ENCODE measurements at regions of chr9 and their contacts with region 1.

Region 1: GRCh38 chr9:34072868-34073590 is 24.3 kb upstream of the UBAP2 start:
- DNase-seq: peak; percentile 60
- H3K4me3 ChIP-seq: no peak overlapping the region
- H3K27me3 ChIP-seq: no peaks in the 10 kb centered on the region
- CTCF ChIP-seq: no peak

Region 2: DNA sequence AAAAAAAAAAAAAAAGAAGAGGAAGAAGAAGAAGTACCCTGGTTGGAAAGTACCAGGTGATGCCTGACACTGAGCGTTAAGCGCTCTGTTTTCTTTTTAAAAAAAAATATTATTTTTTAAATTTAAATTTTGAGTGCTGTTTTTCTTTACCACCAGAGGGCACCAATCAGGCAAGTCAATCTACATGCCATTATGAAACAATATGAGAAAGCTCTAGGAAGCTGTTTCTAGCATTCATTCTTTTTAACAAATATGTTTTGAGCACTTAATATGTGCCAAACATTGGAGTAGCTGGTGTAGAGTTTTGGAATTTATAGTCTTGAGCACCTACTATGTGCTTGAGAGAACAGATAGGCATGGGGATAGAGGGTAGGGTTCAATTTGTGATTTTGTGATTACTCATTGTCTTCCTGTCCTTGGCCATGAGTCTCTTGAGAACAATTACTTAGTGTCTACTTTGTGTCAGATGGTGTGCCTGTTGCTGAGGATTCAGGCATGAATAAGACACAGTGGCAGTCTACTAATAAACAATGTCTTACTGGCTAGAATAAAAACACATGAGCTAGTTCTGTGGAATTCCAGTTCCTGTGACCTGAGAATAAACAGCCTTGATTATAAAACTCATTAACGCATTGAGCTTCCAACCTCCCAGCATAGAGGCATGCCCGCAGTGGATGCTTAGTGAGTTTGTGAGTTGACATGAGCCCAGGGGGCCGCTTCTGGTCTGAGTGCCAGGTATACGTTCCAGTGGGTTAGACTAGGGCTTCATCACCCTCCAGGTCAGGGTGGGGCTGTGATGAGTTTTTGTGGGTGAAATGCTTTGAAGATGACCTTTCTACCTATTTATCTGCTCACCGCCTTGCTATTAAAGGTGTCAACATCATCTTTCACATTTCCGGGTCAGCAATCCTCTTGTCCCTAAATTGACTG is 259.1 kb before region 1 on chr9:
- CTCF ChIA-PET with region 1: interaction called, 10 read pairs
- POLR2A ChIA-PET with region 1: no interaction called
- DNase-seq: peak; percentile 70
- H3K4me3 ChIP-seq: no peak overlapping the region
- H3K27me3 ChIP-seq: no peaks in the 10 kb centered on the region
- CTCF ChIP-seq: peak; percentile 64

Region 3: GRCh38 chr9:34010979-34011378 is 62.0 kb before region 1 on chr9:
- CTCF ChIA-PET with region 1: interaction called, 19 read pairs
- POLR2A ChIA-PET with region 1: no interaction called
- DNase-seq: no peak
- H3K4me3 ChIP-seq: no peak overlapping the region
- H3K27me3 ChIP-seq: no peaks in the 10 kb centered on the region
- CTCF ChIP-seq: peak; percentile 33; the same call in 1 of the 2 replicates

Region 4: GRCh38 chr9:34084562-34084961 is 11.5 kb after region 1 on chr9:
- CTCF ChIA-PET with region 1: interaction called, 10 read pairs
- POLR2A ChIA-PET with region 1: no interaction called
- DNase-seq: no peak
- H3K4me3 ChIP-seq: no peak overlapping the region
- H3K27me3 ChIP-seq: no peaks in the 10 kb centered on the region
- CTCF ChIP-seq: no peak

Region 5: GRCh38 chr9:34252670-34253459 is 179.8 kb after region 1 on chr9:
- CTCF ChIA-PET with region 1: interaction called, 17 read pairs
- POLR2A ChIA-PET with region 1: no interaction called
- DNase-seq: no peak
- H3K4me3 ChIP-seq: no peak overlapping the region
- H3K27me3 ChIP-seq: no peaks in the 10 kb centered on the region
- CTCF ChIP-seq: peak; percentile 94